Naive thymus-derived CD4-positive, alpha-beta T cell (primary cell): ENCODE measurements at regions of chr13 and their contacts with region 1.

Region 1: GRCh38 chr13:99606324-99607066 is 105.2 kb downstream of the TM9SF2 start:
- DNase-seq: peak; percentile 80 to 95 (median 87)
- ATAC-seq: peak; percentile 97
- H3K4me3 ChIP-seq: peak within 1 kb of the TSS; percentile 76
- H3K4me3 Mint-ChIP-seq: peak within 1 kb of the TSS; percentile 84 to 93 (median 92)
- H3K27ac ChIP-seq: peak within 1 kb of the TSS; percentile 83
- H3K27ac Mint-ChIP-seq: peak within 1 kb of the TSS; percentile 88 to 96 (median 93)
- H3K4me1 ChIP-seq: peaks cover 9 to 17% of the 10 kb centered on the region in 2 donors
- H3K4me1 Mint-ChIP-seq: peaks cover 28 to 69% (median 54%) of the 10 kb centered on the region in 7 donors
- H3K27me3 ChIP-seq: no peaks in the 10 kb centered on the region
- H3K27me3 Mint-ChIP-seq: peaks cover 0 to 11% (median 0%) of the 10 kb centered on the region in 5 donors

Region 2: GRCh38 chr13:97975848-97976609 is 1630.5 kb before region 1 on chr13:
- CTCF ChIA-PET with region 1: no interaction called
- POLR2A ChIA-PET with region 1: no interaction called
- intact Hi-C with region 1: loop called in 1 of 2 experiments (anchors 2 kb)
- DNase-seq: peak; percentile 53 to 94 (median 88)
- ATAC-seq: peak; percentile 97
- H3K4me3 ChIP-seq: peak overlapping the region; percentile 69
- H3K4me3 Mint-ChIP-seq: peak overlapping the region; percentile 88 to 100 (median 96)
- H3K27ac ChIP-seq: peak overlapping the region; percentile 88
- H3K27ac Mint-ChIP-seq: peak overlapping the region; percentile 90 to 98 (median 96)
- H3K4me1 ChIP-seq: peaks cover 12 to 15% of the 10 kb centered on the region in 2 donors
- H3K4me1 Mint-ChIP-seq: peaks cover 17 to 44% (median 38%) of the 10 kb centered on the region in 7 donors
- H3K27me3 ChIP-seq: no peaks in the 10 kb centered on the region
- H3K27me3 Mint-ChIP-seq: peaks cover 0 to 5% (median 0%) of the 10 kb centered on the region in 5 donors

Region 3: GRCh38 chr13:99136427-99136954 is 470.0 kb before region 1 on chr13:
- CTCF ChIA-PET with region 1: no interaction called
- POLR2A ChIA-PET with region 1: no interaction called
- intact Hi-C with region 1: no loop called
- DNase-seq: no peak
- ATAC-seq: no peak
- H3K4me3 ChIP-seq: no peak overlapping the region
- H3K4me3 Mint-ChIP-seq: no peak overlapping the region
- H3K27ac ChIP-seq: no peak overlapping the region
- H3K27ac Mint-ChIP-seq: no peak overlapping the region
- H3K4me1 ChIP-seq: no peaks in the 10 kb centered on the region
- H3K4me1 Mint-ChIP-seq: no peaks in the 10 kb centered on the region
- H3K27me3 ChIP-seq: no peaks in the 10 kb centered on the region
- H3K27me3 Mint-ChIP-seq: peaks cover 0 to 18% (median 2%) of the 10 kb centered on the region in 5 donors

Region 4: DNA sequence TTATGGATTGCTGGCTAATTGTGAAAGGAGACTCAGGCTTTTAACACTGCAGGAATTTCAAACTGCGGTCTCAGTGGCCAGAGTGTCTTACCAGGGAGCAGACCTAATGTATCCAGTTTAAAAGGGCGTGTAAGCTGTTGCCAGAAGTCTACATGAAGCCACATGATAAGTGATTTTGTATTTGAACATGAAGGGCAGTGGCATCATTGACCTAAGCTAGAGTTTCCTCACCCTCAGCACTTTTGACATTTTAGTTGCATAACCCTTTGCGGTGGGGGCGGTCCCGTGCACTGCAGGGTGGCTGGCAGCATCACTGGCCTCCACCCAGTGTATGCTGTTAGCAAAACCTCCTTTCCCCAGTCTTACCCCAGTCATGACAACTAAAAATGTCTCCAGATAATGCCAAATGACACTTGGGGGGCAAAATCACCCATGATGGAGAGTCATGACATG is 324.7 kb before region 1 on chr13:
- CTCF ChIA-PET with region 1: no interaction called
- POLR2A ChIA-PET with region 1: no interaction called
- intact Hi-C with region 1: loop called in 1 of 2 experiments (anchors 5 kb)
- DNase-seq: peak in 7 of 9 donors; percentile 45 to 65 (median 55)
- ATAC-seq: peak; percentile 85
- H3K4me3 ChIP-seq: peak overlapping the region; percentile 10
- H3K4me3 Mint-ChIP-seq: peak overlapping the region; percentile 36 to 85 (median 72)
- H3K27ac ChIP-seq: peak overlapping the region; percentile 73
- H3K27ac Mint-ChIP-seq: peak overlapping the region; percentile 86 to 99 (median 97)
- H3K4me1 ChIP-seq: peaks cover 83 to 87% of the 10 kb centered on the region in 2 donors
- H3K4me1 Mint-ChIP-seq: peaks cover 64 to 99% (median 94%) of the 10 kb centered on the region in 7 donors
- H3K27me3 ChIP-seq: no peaks in the 10 kb centered on the region
- H3K27me3 Mint-ChIP-seq: no peaks in the 10 kb centered on the region

Region 5: GRCh38 chr13:99442273-99442895 is 164.1 kb before region 1 on chr13:
- CTCF ChIA-PET with region 1: interaction called, 3 read pairs
- POLR2A ChIA-PET with region 1: no interaction called
- intact Hi-C with region 1: loop called in 1 of 2 experiments (anchors 2 kb)
- DNase-seq: peak in 7 of 9 donors; percentile 50 to 75 (median 68)
- ATAC-seq: peak; percentile 95
- H3K4me3 ChIP-seq: no peak overlapping the region
- H3K4me3 Mint-ChIP-seq: no peak overlapping the region
- H3K27ac ChIP-seq: no peak overlapping the region
- H3K27ac Mint-ChIP-seq: peak overlapping the region in 1 of 9 donors; percentile 47
- H3K4me1 ChIP-seq: peaks cover 0 to 3% of the 10 kb centered on the region in 2 donors
- H3K4me1 Mint-ChIP-seq: peaks cover 2 to 17% (median 7%) of the 10 kb centered on the region in 7 donors
- H3K27me3 ChIP-seq: no peaks in the 10 kb centered on the region
- H3K27me3 Mint-ChIP-seq: peaks cover 0 to 30% (median 0%) of the 10 kb centered on the region in 5 donors

Region 6: DNA sequence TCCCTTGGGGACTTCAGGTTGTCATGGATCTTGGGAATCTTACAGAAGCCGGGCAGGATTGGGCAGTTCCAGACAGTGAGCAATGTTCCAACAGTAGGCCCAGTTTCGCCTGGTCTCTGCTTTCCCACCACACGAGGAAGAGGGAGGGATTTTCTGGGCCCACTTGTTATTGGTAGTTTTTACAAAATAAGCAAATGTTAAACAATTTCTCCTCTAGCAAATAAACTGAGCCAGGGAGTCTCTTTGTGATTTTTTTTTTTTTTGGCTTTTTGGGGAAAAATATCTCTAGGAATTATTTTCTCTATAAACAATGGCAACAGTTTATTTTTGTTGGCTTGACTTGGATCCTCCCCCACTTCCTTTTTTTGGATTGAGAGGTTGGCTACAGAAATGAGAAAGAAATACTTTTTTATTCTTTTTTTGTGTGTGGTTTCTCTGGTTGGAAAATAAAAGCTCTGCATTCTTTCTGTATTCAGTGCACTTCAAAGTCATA is 15.9 kb before region 1 on chr13:
- CTCF ChIA-PET with region 1: no interaction called
- POLR2A ChIA-PET with region 1: interaction called, 5 read pairs
- intact Hi-C with region 1: loop called in 1 of 2 experiments (anchors 2 kb)
- DNase-seq: no peak
- ATAC-seq: no peak
- H3K4me3 ChIP-seq: no peak overlapping the region
- H3K4me3 Mint-ChIP-seq: peak overlapping the region in 3 of 10 donors; percentile 13 to 31 (median 17)
- H3K27ac ChIP-seq: no peak overlapping the region
- H3K27ac Mint-ChIP-seq: peak overlapping the region in 1 of 9 donors; percentile 45
- H3K4me1 ChIP-seq: peaks cover 0 to 10% of the 10 kb centered on the region in 2 donors
- H3K4me1 Mint-ChIP-seq: peaks cover 0 to 35% (median 16%) of the 10 kb centered on the region in 7 donors
- H3K27me3 ChIP-seq: no peaks in the 10 kb centered on the region
- H3K27me3 Mint-ChIP-seq: peaks cover 0 to 29% (median 0%) of the 10 kb centered on the region in 5 donors

Region 7: GRCh38 chr13:100100115-100100879 is 493.8 kb after region 1 on chr13:
- CTCF ChIA-PET with region 1: no interaction called
- POLR2A ChIA-PET with region 1: no interaction called
- intact Hi-C with region 1: no loop called
- DNase-seq: no peak
- ATAC-seq: no peak
- H3K4me3 ChIP-seq: no peak overlapping the region
- H3K4me3 Mint-ChIP-seq: no peak overlapping the region
- H3K27ac ChIP-seq: no peak overlapping the region
- H3K27ac Mint-ChIP-seq: no peak overlapping the region
- H3K4me1 ChIP-seq: no peaks in the 10 kb centered on the region
- H3K4me1 Mint-ChIP-seq: peaks cover 0 to 25% (median 12%) of the 10 kb centered on the region in 7 donors
- H3K27me3 ChIP-seq: no peaks in the 10 kb centered on the region
- H3K27me3 Mint-ChIP-seq: no peaks in the 10 kb centered on the region

Region 8: GRCh38 chr13:100588331-100589177 is 982.1 kb after region 1 on chr13 and contains the start of gene GGACT:
- CTCF ChIA-PET with region 1: no interaction called
- POLR2A ChIA-PET with region 1: no interaction called
- intact Hi-C with region 1: loop called in 1 of 2 experiments (anchors 2 kb)
- DNase-seq: peak; percentile 75 to 90 (median 87)
- ATAC-seq: peak; percentile 97
- H3K4me3 ChIP-seq: peak within 1 kb of the TSS; percentile 78
- H3K4me3 Mint-ChIP-seq: peak within 1 kb of the TSS; percentile 82 to 92 (median 85)
- H3K27ac ChIP-seq: peak within 1 kb of the TSS; percentile 79
- H3K27ac Mint-ChIP-seq: peak within 1 kb of the TSS; percentile 81 to 95 (median 92)
- H3K4me1 ChIP-seq: peaks cover 7 to 42% of the 10 kb centered on the region in 2 donors
- H3K4me1 Mint-ChIP-seq: peaks cover 28 to 60% (median 50%) of the 10 kb centered on the region in 7 donors
- H3K27me3 ChIP-seq: no peaks in the 10 kb centered on the region
- H3K27me3 Mint-ChIP-seq: no peaks in the 10 kb centered on the region
- total RNA-seq, gene GGACT: 5.3 to 8.7 (median 7.4) TPM